Prostate gland (tissue), 2 donors: ENCODE measurements at regions of chr19 and their contacts with region 1.

Region 1: GRCh38 chr19:7522072-7522922 is at the start of gene MCOLN1:
- DNase-seq: peak; percentile 99
- H3K4me3 ChIP-seq: peak within 1 kb of the TSS; percentile 77 to 94
- H3K27ac ChIP-seq: peak within 1 kb of the TSS; percentile 47 to 58
- H3K4me1 ChIP-seq: peaks cover 12% of the 10 kb centered on the region
- H3K27me3 ChIP-seq: no peaks in the 10 kb centered on the region
- CTCF ChIP-seq: peak in 2 of 4 experiments; percentile 42 to 45
- POLR2A ChIP-seq: peak; percentile 81
- total RNA-seq, gene MCOLN1: 13.4 to 24.8 TPM

Region 2: DNA sequence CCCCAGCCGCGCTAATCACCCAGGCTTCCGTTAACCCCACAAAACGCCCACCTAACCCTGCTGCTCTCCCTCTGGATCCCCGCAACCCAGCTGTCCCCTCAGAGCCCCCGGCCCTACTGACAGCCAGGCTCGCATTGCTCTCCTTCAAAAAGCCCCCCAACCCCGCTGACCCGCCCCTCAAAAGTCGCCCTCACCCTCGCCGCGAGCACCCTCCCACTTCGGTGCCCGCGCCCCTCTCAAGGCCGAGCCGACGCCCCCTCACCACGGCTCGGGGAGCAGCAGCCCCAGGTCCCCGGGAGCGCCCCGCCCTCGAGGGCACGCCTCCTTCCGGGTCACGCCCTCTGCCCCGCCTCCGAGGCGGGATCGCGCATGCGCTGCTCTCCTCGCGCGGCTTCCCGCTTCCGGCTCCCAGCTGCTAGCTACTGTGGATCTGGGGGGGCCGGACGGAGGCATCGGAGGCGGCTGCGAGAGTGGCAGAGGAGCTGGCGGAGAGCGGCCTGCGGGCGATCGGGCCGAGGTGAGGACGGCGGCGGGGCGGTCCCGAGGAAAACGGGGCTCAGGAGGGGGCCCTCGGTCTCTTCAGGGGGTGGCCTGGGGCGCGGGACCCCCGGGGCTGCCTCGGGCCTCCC is 127.5 kb before region 1 on chr19:
- intact Hi-C with region 1: loop called (anchors 5 kb)
- DNase-seq: peak; percentile 84
- H3K4me3 ChIP-seq: peak overlapping the region; percentile 89 to 99
- H3K27ac ChIP-seq: peak overlapping the region; percentile 69 to 77
- H3K4me1 ChIP-seq: no peaks in the 10 kb centered on the region
- H3K27me3 ChIP-seq: no peaks in the 10 kb centered on the region
- CTCF ChIP-seq: peak in 1 of 4 experiments; percentile 19
- POLR2A ChIP-seq: peak; percentile 89